ENCODE measurements at regions of chr1 and their contacts with region 1.

Region 1: GRCh38 chr1:160251687-160252526 is 10.4 kb downstream of the DCAF8 start:
- DNase-seq: peak in 8 of 9 donors; percentile 43 to 70 (median 60)
- ATAC-seq: peak; percentile 99
- H3K4me3 ChIP-seq: no peak overlapping the region
- H3K4me3 Mint-ChIP-seq: no peak overlapping the region
- H3K27ac ChIP-seq: peak overlapping the region; percentile 6
- H3K27ac Mint-ChIP-seq: peak overlapping the region in 7 of 9 donors; percentile 46 to 80 (median 62)
- H3K4me1 ChIP-seq: no peaks in the 10 kb centered on the region
- H3K4me1 Mint-ChIP-seq: peaks cover 6 to 34% (median 30%) of the 10 kb centered on the region in 7 donors
- H3K27me3 ChIP-seq: no peaks in the 10 kb centered on the region
- H3K27me3 Mint-ChIP-seq: no peaks in the 10 kb centered on the region

Region 2: GRCh38 chr1:160291248-160292220 is 39.6 kb after region 1 on chr1:
- CTCF ChIA-PET with region 1: interaction called, 15 read pairs
- POLR2A ChIA-PET with region 1: no interaction called
- intact Hi-C with region 1: loop called (anchors 1 to 2 kb)
- DNase-seq: peak; percentile 24 to 82 (median 74)
- ATAC-seq: peak; percentile 98
- H3K4me3 ChIP-seq: no peak overlapping the region
- H3K4me3 Mint-ChIP-seq: no peak overlapping the region
- H3K27ac ChIP-seq: no peak overlapping the region
- H3K27ac Mint-ChIP-seq: peak overlapping the region; percentile 0 to 88 (median 40)
- H3K4me1 ChIP-seq: peaks cover 0 to 3% of the 10 kb centered on the region in 2 donors
- H3K4me1 Mint-ChIP-seq: peaks cover 2 to 7% (median 6%) of the 10 kb centered on the region in 7 donors
- H3K27me3 ChIP-seq: no peaks in the 10 kb centered on the region
- H3K27me3 Mint-ChIP-seq: no peaks in the 10 kb centered on the region

Measured in naive thymus-derived CD4-positive, alpha-beta T cell (primary cell).